Activated CD4-positive, alpha-beta memory T cell treated with anti-CD3 and anti-CD28 coated beads for 36 hours (primary cell): ENCODE measurements at regions of chr7 and their contacts with region 1.

Region 1: DNA sequence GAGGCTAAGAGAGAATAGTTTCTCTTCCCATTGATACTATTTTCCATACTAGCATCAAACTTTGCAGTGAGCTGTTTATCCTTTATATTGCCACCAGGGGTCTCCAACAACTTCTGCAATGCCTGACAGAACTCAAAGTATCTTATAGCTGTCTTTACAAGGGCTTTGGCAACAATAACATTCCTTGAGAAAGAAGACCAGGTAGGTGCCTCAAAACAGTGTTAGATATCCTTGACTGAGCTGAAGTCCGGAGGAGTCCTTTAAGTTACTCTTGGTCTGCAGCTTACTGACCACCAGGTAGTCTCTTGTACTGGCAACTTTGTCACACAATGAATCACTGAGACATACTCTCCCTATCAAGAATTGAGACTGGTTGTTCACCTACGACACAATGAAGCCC is 30.0 kb upstream of the TES start:
- DNase-seq: peak; percentile 15
- H3K4me3 Mint-ChIP-seq: no peak overlapping the region
- H3K27ac Mint-ChIP-seq: no peak overlapping the region
- H3K4me1 Mint-ChIP-seq: no peaks in the 10 kb centered on the region
- H3K27me3 Mint-ChIP-seq: no peaks in the 10 kb centered on the region

Region 2: GRCh38 chr7:115417662-115418061 is 762.6 kb before region 1 on chr7:
- CTCF ChIA-PET with region 1: no interaction called
- POLR2A ChIA-PET with region 1: no interaction called
- intact Hi-C with region 1: no loop called
- DNase-seq: no peak
- H3K4me3 Mint-ChIP-seq: no peak overlapping the region
- H3K27ac Mint-ChIP-seq: no peak overlapping the region
- H3K4me1 Mint-ChIP-seq: no peaks in the 10 kb centered on the region
- H3K27me3 Mint-ChIP-seq: no peaks in the 10 kb centered on the region

Region 3: GRCh38 chr7:115914951-115915350 is 265.4 kb before region 1 on chr7:
- CTCF ChIA-PET with region 1: no interaction called
- POLR2A ChIA-PET with region 1: no interaction called
- intact Hi-C with region 1: no loop called
- DNase-seq: no peak
- H3K4me3 Mint-ChIP-seq: no peak overlapping the region
- H3K27ac Mint-ChIP-seq: no peak overlapping the region
- H3K4me1 Mint-ChIP-seq: no peaks in the 10 kb centered on the region
- H3K27me3 Mint-ChIP-seq: peaks cover 7% of the 10 kb centered on the region

Region 4: GRCh38 chr7:116148626-116149025 is 31.7 kb before region 1 on chr7:
- CTCF ChIA-PET with region 1: interaction called, 10 read pairs
- POLR2A ChIA-PET with region 1: no interaction called
- intact Hi-C with region 1: no loop called
- DNase-seq: no peak
- H3K4me3 Mint-ChIP-seq: no peak overlapping the region
- H3K27ac Mint-ChIP-seq: no peak overlapping the region
- H3K4me1 Mint-ChIP-seq: peaks cover 9% of the 10 kb centered on the region
- H3K27me3 Mint-ChIP-seq: peaks cover 1% of the 10 kb centered on the region

Region 5: DNA sequence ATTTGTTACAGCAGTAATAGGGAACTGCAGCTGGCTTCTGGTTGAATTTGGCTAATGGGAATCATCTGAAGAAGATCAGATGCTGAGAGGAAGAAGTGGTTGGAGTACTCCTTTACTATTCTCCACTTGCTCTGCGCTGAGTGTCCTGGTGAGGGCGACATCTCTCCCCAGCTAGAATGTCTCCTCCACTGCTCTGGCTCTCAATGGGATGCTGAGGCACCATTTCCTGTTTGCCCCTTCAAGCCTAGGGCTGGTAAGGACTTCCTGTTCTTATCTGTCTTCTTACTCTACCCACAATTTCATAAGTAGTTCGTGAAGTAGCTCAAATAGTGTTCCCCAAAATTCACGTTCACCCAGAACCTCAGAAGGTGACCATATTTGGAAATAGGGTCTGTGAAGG is 13.1 kb before region 1 on chr7:
- CTCF ChIA-PET with region 1: interaction called, 14 read pairs
- POLR2A ChIA-PET with region 1: no interaction called
- intact Hi-C with region 1: no loop called
- DNase-seq: peak; percentile 47
- H3K4me3 Mint-ChIP-seq: no peak overlapping the region
- H3K27ac Mint-ChIP-seq: no peak overlapping the region
- H3K4me1 Mint-ChIP-seq: peaks cover 8% of the 10 kb centered on the region
- H3K27me3 Mint-ChIP-seq: peaks cover 10% of the 10 kb centered on the region

Region 6: DNA sequence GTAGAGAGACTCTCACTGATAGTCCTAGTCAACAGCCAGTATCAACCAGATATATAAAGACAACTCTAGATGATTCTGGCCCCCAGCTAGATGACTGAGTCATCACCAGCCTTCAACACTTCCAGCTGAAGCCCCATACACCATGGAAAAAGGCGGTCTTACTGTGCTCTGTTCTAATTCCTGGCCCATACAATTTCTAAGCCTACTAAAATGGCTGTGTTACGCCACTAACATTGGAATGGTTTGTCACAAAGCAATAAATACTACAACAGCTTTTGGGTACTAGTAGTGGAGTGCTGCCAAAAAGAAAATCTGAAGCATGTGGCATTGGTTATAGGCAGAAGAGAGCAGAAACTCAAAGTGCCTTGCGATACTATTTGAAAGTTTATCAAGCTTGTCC is 17.1 kb after region 1 on chr7:
- CTCF ChIA-PET with region 1: interaction called, 20 read pairs
- POLR2A ChIA-PET with region 1: no interaction called
- intact Hi-C with region 1: no loop called
- DNase-seq: no peak
- H3K4me3 Mint-ChIP-seq: no peak overlapping the region
- H3K27ac Mint-ChIP-seq: no peak overlapping the region
- H3K4me1 Mint-ChIP-seq: no peaks in the 10 kb centered on the region
- H3K27me3 Mint-ChIP-seq: peaks cover 3% of the 10 kb centered on the region

Region 7: DNA sequence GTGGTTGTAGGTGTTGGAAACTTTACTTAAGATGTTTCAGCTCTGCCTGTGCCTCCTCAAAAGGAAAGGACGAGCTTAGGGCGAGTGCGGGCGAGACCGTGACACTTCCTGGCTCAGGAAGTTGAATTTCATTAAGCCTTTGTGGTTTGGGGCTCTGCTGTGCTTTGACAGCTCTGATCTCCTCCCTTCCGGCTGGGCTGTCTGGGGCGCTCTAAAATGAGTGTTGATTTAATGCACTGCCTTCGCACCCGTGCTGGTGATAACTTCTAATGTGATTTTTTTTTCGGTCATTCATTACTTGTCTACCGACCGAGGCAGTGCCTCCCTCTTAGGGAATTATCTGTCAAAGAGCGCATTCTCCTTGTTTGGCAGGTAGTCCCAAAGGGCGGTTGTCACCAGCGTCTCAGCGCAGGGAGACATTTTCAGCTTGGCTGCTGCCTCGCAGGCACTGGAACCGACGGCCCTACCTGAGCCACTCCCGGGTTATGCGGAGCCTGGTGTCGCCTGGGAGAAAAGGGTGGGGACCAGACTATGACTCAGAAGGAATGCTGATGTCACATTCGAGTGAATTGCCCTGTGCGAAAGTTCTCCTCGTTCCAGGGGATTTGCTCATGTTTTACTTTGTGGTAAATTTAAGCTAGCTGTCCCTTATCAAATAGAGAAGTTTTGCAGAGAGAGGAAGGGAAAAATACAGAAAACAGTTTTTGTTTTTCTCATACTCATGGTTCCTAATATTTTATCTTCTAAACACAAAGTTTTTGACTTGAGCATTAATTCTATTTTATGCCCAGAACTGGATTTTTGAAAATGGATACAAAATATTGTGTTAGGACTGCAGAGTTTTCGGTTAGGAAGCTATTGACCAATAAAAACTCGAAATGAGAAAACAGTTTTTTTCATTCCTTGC is 31.0 kb after region 1 on chr7:
- CTCF ChIA-PET with region 1: interaction called, 15 read pairs
- POLR2A ChIA-PET with region 1: no interaction called
- intact Hi-C with region 1: loop called (anchors 2 kb)
- DNase-seq: peak; percentile 86
- H3K4me3 Mint-ChIP-seq: peak overlapping the region; percentile 96
- H3K27ac Mint-ChIP-seq: peak overlapping the region; percentile 99
- H3K4me1 Mint-ChIP-seq: peaks cover 55% of the 10 kb centered on the region
- H3K27me3 Mint-ChIP-seq: no peaks in the 10 kb centered on the region

Region 8: DNA sequence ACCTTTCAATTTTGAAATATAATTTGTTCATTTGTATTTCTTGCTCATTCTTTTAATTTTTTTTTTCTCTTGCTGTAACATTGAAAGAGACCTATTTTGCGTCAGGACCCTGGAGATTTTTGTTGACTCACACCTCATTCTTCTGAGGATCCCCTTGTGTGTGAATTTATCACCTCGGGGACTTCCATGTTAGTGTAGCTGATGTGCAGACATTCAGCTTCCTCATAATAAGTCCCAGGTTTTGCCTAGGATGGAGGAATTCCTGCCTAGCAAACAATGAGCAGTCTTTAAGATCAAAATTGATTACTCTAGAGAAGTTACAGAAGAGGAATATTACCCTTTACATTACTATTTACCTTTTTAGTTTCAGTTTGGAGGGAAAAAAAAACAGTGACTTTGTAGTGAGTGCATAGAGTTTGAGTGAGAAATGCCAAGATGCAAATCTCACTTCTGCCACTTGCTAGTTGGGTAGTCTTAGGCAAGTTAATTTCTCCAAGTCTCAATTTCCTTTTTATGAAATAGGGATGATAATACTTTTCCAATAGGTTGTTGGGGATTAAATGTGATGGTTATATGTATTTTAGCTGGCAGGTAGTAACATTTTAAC is 44.3 kb after region 1 on chr7:
- CTCF ChIA-PET with region 1: interaction called, 399 read pairs
- POLR2A ChIA-PET with region 1: no interaction called
- intact Hi-C with region 1: no loop called
- DNase-seq: no peak
- H3K4me3 Mint-ChIP-seq: peak overlapping the region; percentile 45
- H3K27ac Mint-ChIP-seq: peak overlapping the region; percentile 73
- H3K4me1 Mint-ChIP-seq: peaks cover 77% of the 10 kb centered on the region
- H3K27me3 Mint-ChIP-seq: no peaks in the 10 kb centered on the region